ENCODE measurements at regions of chr15 and their contacts with region 1.

Region 1: GRCh38 chr15:79004336-79004735 is 59.5 kb upstream of the CTSH start:
- DNase-seq: no peak
- ATAC-seq: peak; percentile 82
- H3K4me3 Mint-ChIP-seq: no peak overlapping the region
- H3K27ac Mint-ChIP-seq: no peak overlapping the region
- H3K4me1 Mint-ChIP-seq: peaks cover 18% of the 10 kb centered on the region
- H3K27me3 Mint-ChIP-seq: no peaks in the 10 kb centered on the region
- CTCF ChIP-seq: no peak

Region 2: GRCh38 chr15:78909791-78910228 is 94.5 kb before region 1 on chr15:
- CTCF ChIA-PET with region 1: interaction called, 149 read pairs
- POLR2A ChIA-PET with region 1: no interaction called
- DNase-seq: peak; percentile 65
- ATAC-seq: peak; percentile 79
- H3K4me3 Mint-ChIP-seq: no peak overlapping the region
- H3K27ac Mint-ChIP-seq: peak overlapping the region; percentile 89
- H3K4me1 Mint-ChIP-seq: peaks cover 26% of the 10 kb centered on the region
- H3K27me3 Mint-ChIP-seq: no peaks in the 10 kb centered on the region
- CTCF ChIP-seq: peak; percentile 70

Region 3: DNA sequence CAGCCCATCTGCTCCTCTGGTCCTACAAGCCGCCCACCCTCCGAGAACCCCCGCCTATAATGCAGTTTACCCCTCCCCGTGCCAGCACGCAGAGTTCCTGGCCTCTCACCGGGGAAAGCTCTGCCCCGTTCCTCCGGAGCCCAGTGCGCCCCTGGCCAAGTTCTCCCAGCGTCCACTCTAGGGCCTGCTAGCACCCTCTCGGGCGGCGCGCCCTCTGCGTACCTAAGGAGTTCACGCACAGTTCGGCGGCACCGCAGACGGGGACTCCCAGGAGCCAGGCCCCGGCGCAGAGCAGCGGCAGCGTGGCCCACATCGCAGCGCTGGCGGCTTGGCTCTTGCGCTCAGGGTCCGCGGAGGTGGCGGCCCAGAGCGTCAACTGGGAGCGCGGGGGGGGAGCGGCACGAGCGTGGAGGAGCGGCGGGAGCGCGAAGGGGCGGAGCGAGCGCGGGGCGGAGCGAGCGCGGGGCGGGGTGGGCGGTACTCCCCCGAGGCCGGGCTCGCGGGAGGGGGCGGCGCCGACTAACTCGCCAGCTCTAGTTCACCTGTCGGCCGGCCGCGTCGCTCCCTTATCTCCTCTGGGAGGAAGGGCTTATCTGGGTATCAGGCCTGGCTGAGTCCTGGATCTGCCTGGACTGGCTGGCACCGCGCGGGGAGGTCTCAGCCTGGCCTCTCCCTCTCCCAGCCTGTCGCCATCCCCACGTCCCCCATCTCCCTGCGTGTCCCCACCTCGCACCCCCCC is 59.5 kb before region 1 on chr15 and contains the start of gene CTSH:
- CTCF ChIA-PET with region 1: interaction called, 18 read pairs
- POLR2A ChIA-PET with region 1: no interaction called
- DNase-seq: peak; percentile 90
- ATAC-seq: peak; percentile 94
- H3K4me3 Mint-ChIP-seq: peak within 1 kb of the TSS; percentile 70
- H3K27ac Mint-ChIP-seq: no peak within 1 kb of the TSS
- H3K4me1 Mint-ChIP-seq: peaks cover 8% of the 10 kb centered on the region
- H3K27me3 Mint-ChIP-seq: peaks cover 47% of the 10 kb centered on the region
- CTCF ChIP-seq: no peak
- total RNA-seq, gene CTSH: 20.4 to 31.8 TPM (median 31.1 TPM) in 3 replicates

Region 4: GRCh38 chr15:78979456-78980320 is 24.6 kb before region 1 on chr15:
- CTCF ChIA-PET with region 1: interaction called, 69 read pairs
- POLR2A ChIA-PET with region 1: no interaction called
- DNase-seq: peak; percentile 71
- ATAC-seq: peak; percentile 90
- H3K4me3 Mint-ChIP-seq: no peak overlapping the region
- H3K27ac Mint-ChIP-seq: no peak overlapping the region
- H3K4me1 Mint-ChIP-seq: peaks cover 11% of the 10 kb centered on the region
- H3K27me3 Mint-ChIP-seq: peaks cover 16% of the 10 kb centered on the region
- CTCF ChIP-seq: peak; percentile 78

Region 5: GRCh38 chr15:79028411-79028964 is 24.2 kb after region 1 on chr15:
- CTCF ChIA-PET with region 1: interaction called, 67 read pairs
- POLR2A ChIA-PET with region 1: no interaction called
- DNase-seq: peak; percentile 75
- ATAC-seq: peak; percentile 65
- H3K4me3 Mint-ChIP-seq: no peak overlapping the region
- H3K27ac Mint-ChIP-seq: no peak overlapping the region
- H3K4me1 Mint-ChIP-seq: peaks cover 11% of the 10 kb centered on the region
- H3K27me3 Mint-ChIP-seq: no peaks in the 10 kb centered on the region; the same call in 1 of the 2 replicates
- CTCF ChIP-seq: peak; percentile 95

Region 6: DNA sequence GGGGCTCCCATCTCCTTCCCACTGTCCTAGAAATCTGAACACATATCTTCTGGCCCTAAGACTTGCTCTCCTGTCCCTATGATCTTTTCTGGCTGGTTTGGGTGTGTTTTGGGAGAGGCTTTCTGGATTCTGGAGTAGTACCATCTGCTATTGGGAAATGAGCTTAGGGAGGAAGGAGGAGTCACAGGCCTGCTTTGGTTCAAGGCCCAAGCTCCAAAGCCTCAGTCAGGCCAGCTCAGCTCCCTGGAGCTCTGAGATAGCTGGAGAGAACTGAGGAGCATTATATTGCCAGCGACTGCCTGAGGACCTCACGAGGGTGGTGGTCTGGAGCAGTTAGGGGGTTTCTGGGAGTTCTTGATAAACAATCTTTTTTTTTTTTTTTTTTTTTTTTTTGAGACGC is 67.6 kb after region 1 on chr15:
- CTCF ChIA-PET with region 1: no interaction called
- POLR2A ChIA-PET with region 1: no interaction called
- DNase-seq: no peak
- ATAC-seq: no peak
- H3K4me3 Mint-ChIP-seq: no peak overlapping the region
- H3K27ac Mint-ChIP-seq: no peak overlapping the region
- H3K4me1 Mint-ChIP-seq: no peaks in the 10 kb centered on the region
- H3K27me3 Mint-ChIP-seq: peaks cover 19% of the 10 kb centered on the region
- CTCF ChIP-seq: no peak

Region 7: GRCh38 chr15:79184465-79184892 is 180.1 kb after region 1 on chr15:
- CTCF ChIA-PET with region 1: interaction called, 29 read pairs
- POLR2A ChIA-PET with region 1: no interaction called
- DNase-seq: peak; percentile 80
- ATAC-seq: peak; percentile 75
- H3K4me3 Mint-ChIP-seq: no peak overlapping the region
- H3K27ac Mint-ChIP-seq: no peak overlapping the region
- H3K4me1 Mint-ChIP-seq: peaks cover 4% of the 10 kb centered on the region
- H3K27me3 Mint-ChIP-seq: peaks cover 12% of the 10 kb centered on the region
- CTCF ChIP-seq: peak; percentile 90

Region 8: DNA sequence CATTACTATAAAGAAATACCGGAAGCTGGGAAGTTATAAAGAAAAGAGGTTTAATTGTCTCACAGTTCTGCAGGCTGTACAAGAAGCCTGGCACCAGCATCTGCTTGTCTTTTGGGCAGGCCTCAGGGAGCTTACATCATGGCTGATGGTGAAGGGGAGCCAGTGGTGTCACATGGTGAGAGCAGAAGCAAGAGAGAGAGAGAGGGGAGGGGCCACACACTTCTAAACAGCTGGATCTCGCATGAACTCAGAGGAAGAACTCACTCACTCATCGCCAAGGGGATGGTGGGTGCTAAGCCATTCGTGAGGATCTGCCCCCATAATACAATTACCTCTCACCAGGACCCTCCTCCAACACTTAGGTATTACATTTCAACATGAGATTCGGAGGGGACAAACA is 226.4 kb after region 1 on chr15:
- CTCF ChIA-PET with region 1: no interaction called
- POLR2A ChIA-PET with region 1: no interaction called
- DNase-seq: no peak
- ATAC-seq: no peak
- H3K4me3 Mint-ChIP-seq: no peak overlapping the region
- H3K27ac Mint-ChIP-seq: no peak overlapping the region
- H3K4me1 Mint-ChIP-seq: no peaks in the 10 kb centered on the region
- H3K27me3 Mint-ChIP-seq: no peaks in the 10 kb centered on the region; the same call in 1 of the 2 replicates
- CTCF ChIP-seq: no peak